ENCODE measurements at regions of chr17 and their contacts with region 1.

Region 1: DNA sequence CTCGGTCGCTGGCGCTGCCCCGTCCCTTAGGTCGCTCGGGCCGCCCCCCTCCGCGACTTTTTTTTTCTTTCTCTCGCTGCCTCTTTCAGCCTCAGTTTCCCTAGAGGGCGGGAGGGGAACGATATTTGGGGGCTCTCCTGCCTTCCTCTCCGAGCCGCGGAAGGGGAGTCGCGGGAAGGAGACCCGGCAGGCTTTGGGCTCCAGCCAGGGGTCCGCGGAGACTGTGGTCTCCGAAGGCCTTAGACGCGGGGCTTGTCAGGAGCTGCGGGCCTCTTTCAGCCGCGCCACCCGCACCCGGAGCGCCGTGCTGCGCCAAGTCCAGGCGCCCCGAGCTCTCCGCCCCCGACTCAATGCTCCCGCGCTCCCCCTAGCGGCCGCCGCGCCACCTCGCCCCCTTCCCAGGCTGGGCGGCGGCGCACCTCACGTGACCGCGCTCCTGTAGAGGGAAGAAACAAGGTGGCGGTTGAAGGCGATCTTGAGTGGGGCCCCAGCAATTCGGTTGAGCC is at the start of gene LRRC37B:
- DNase-seq: peak; percentile 42
- ATAC-seq: peak; percentile 95
- H3K4me3 ChIP-seq: peak within 1 kb of the TSS; percentile 74
- H3K27ac ChIP-seq: peak within 1 kb of the TSS; percentile 63; the same call in 1 of the 2 replicates
- H3K4me1 ChIP-seq: peaks cover 4 to 14% of the 10 kb centered on the region in 2 experiments
- H3K27me3 ChIP-seq: no peaks in the 10 kb centered on the region
- CTCF ChIP-seq: peak; percentile 66 to 90 (median 71)
- POLR2A ChIP-seq: no peak
- RAD21 ChIP-seq: peak; percentile 45
- total RNA-seq, gene LRRC37B: 8.8 TPM

Region 2: DNA sequence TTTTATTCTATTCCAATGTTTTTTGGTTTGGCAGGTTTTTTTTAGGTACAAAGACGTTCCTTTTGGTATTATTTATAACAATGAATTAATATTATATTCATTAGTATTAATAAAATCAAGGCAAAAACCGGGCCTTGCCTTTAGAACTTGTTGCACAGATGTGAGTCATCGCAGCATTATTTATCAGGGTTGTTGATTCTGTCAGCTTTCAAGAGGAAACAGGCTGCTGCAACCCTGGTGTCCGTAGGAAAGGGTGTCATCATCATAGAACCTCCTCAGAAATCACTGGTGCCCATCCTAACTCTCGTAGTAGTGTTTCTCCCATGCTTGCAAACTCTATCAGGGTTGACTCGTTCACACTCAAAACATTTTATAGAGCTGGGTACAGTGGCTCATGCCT is 10.0 kb before region 1 on chr17:
- CTCF ChIA-PET with region 1: interaction called, 12 read pairs
- POLR2A ChIA-PET with region 1: interaction called, 3 read pairs
- RAD21 ChIA-PET with region 1: no interaction called
- intact Hi-C with region 1: no loop called
- DNase-seq: no peak
- ATAC-seq: no peak
- H3K4me3 ChIP-seq: no peak overlapping the region
- H3K27ac ChIP-seq: no peak overlapping the region
- H3K4me1 ChIP-seq: no peaks in the 10 kb centered on the region
- H3K27me3 ChIP-seq: no peaks in the 10 kb centered on the region
- CTCF ChIP-seq: no peak
- POLR2A ChIP-seq: no peak
- RAD21 ChIP-seq: no peak

Measured in HCT116 (cell line).